Transverse colon (tissue), 4 donors: ENCODE measurements at regions of chr1 and their contacts with region 1.

Region 1: DNA sequence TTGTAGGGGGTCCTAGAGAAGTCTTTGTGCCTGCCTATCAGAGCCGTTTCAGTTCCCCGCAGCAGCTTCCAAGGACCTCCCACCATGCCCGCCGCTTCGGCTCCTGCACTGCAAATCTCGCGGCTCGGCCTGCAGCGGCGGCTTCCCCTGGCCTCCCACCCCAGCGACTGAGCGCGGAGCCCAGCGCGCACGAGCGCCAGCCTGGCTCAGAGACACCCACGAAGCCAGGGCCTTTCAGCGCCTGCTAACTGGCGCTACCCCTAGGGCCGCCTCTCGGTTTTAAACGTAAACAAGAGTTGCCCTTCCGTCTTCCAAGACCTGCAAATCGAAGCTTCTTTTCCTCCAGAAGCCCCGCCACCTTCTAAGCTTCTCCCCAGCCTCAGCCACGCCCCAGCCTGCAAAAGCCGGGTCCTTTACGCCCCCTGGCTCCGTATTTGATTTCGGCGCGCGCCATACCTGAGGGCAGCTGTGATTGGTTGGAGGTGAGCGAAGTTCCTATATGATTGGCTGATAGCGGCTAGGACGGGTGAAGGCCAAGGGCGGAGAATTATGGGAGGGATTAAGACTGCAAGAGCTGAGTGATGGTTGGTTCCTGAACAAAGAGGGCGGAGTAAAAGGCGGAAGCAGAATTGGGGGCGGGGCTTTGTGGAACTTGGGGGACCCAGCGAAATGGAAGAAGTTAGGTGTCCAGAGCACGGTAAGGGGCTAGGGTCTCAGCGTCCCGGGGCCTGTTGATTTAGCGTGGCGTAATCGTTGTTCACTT is at the start of gene TTF2:
- DNase-seq: peak; percentile 95
- H3K4me3 ChIP-seq: peak within 1 kb of the TSS; percentile 52 to 97 (median 70)
- H3K27ac ChIP-seq: peak within 1 kb of the TSS; percentile 88 to 93 (median 90)
- H3K4me1 ChIP-seq: peaks cover 0 to 22% (median 8%) of the 10 kb centered on the region in 4 donors
- H3K27me3 ChIP-seq: no peaks in the 10 kb centered on the region
- CTCF ChIP-seq: peak in 4 of 5 experiments; percentile 19 to 54 (median 32)
- EP300 ChIP-seq: no peak
- POLR2A ChIP-seq: peak; percentile 68
- total RNA-seq, gene TTF2: 9.6 to 25.9 (median 16.6) TPM

Region 2: DNA sequence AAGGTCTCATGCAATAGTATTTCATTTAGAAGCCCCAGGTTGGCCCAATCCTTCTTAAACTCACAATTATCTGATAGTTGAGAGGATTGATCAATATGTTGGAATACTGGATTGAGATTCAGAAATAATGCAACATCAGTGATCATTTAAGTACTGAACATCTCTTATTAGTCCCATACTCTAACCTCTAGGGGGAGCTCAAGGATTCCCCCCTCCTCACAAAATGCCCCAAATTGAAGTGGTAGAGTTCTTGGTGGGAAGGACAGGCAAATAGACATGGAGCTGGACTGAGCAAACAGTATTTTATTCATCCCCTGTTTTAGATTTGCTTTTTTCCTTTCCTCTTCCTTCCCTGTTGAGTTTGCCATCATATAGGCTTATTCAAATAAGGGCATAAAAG is 1784.6 kb before region 1 on chr1:
- in situ Hi-C with region 1: no loop called
- intact Hi-C with region 1: no loop called
- DNase-seq: no peak
- H3K4me3 ChIP-seq: no peak overlapping the region
- H3K27ac ChIP-seq: no peak overlapping the region
- H3K4me1 ChIP-seq: no peaks in the 10 kb centered on the region
- H3K27me3 ChIP-seq: no peaks in the 10 kb centered on the region
- CTCF ChIP-seq: peak in 2 of 5 experiments; percentile 17 to 22
- EP300 ChIP-seq: no peak
- POLR2A ChIP-seq: no peak

Region 3: DNA sequence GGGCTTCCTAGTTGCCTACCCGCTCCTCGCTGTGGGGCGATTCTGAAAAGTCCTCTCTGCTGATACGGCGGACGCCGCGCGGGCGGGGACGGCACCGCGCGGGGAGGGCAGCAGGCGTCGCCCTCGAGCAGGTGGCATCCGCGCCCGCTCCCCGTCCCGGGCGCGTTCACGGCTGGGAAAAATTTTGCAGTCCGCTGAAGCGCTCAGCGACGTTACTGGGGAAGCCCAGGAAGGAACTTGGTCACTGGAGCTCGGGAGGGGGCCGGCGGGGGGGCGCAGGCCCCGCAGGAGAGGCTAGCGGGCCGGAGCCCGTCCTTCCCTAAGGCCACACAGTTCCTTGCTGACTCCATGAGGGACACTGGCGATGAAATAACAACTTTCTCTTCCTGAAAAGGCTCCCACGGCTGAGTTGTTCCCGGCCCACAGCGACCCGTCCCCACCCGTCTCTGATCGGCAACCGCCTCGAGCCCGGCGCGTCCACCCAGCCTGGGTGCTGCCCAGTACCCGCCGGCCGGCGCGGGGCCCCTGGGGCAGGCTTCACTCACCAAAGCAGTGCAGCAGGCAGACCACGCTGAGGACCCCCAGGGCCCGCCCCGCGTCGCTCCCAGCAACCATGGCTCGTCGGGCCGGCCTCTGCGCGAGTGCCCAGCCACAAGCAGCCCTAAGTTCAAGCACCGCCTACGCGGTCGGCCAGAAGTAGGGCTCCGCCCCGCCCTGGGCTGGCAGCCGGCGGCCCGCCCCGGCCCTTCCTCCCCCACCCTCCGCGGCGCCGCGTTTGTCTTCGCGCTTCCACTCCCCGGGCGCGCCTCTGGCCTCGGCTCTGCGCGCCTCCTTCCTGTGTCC is 489.3 kb before region 1 on chr1 and contains the start of gene CD58:
- in situ Hi-C with region 1: loop called in 2 of 4 experiments (anchors 10 to 25 kb)
- intact Hi-C with region 1: loop called (anchors 10 kb)
- DNase-seq: peak; percentile 93
- H3K4me3 ChIP-seq: peak within 1 kb of the TSS; percentile 51 to 83 (median 67)
- H3K27ac ChIP-seq: peak within 1 kb of the TSS; percentile 96 to 99 (median 98)
- H3K4me1 ChIP-seq: peaks cover 0 to 37% (median 19%) of the 10 kb centered on the region in 4 donors
- H3K27me3 ChIP-seq: no peaks in the 10 kb centered on the region
- CTCF ChIP-seq: peak; percentile 64 to 85 (median 78)
- EP300 ChIP-seq: no peak
- POLR2A ChIP-seq: peak; percentile 88
- total RNA-seq, gene CD58: 1.8 to 48.7 (median 32.7) TPM

Region 4: GRCh38 chr1:116737020-116737854 is 322.6 kb before region 1 on chr1:
- in situ Hi-C with region 1: loop called in 2 of 4 experiments (anchors 10 kb)
- intact Hi-C with region 1: loop called (anchors 5 kb)
- DNase-seq: peak; percentile 65
- H3K4me3 ChIP-seq: no peak overlapping the region
- H3K27ac ChIP-seq: peak overlapping the region in 3 of 4 donors; percentile 15 to 41 (median 31)
- H3K4me1 ChIP-seq: peaks cover 0 to 8% (median 0%) of the 10 kb centered on the region in 4 donors
- H3K27me3 ChIP-seq: no peaks in the 10 kb centered on the region
- CTCF ChIP-seq: peak; percentile 71 to 85 (median 81)
- EP300 ChIP-seq: no peak
- POLR2A ChIP-seq: no peak

Region 5: DNA sequence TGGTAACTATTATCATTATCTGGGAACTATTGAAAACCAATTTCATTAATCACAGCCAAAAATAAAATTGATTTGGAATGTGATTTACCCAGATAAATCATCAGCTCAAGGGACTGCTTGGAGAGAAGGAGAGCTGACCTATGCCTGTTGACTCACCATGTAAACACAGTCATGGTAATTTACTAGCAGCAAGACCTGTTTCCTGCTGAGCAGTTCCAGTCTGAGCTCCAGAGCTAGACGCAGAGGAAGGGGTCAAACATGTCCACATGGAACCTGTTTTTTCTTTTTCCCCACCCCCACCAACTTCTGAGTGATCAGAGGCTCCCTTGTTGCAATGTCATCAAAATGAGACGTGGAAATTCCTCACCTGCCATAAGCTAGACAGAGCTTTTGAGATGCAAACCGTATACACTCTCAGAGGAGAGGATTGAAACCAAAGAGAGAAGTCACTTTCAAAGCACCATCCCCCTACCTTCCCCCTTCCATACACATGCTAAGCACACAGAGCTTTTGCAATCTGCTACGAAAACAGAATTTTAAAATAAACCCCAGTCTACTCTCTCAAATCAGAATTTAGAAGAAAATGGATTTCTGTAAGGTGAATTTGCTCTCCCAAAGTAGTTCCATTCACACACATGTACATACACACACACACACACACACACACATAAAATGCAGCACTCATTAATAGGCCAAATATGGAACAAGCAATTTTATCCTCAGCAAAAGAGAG is 206.0 kb before region 1 on chr1:
- in situ Hi-C with region 1: no loop called
- intact Hi-C with region 1: loop called (anchors 10 kb)
- DNase-seq: peak; percentile 49
- H3K4me3 ChIP-seq: no peak overlapping the region
- H3K27ac ChIP-seq: peak overlapping the region; percentile 37 to 75 (median 61)
- H3K4me1 ChIP-seq: peaks cover 13 to 35% (median 23%) of the 10 kb centered on the region in 4 donors
- H3K27me3 ChIP-seq: no peaks in the 10 kb centered on the region
- CTCF ChIP-seq: no peak
- EP300 ChIP-seq: no peak
- POLR2A ChIP-seq: no peak

Region 6: GRCh38 chr1:116954440-116954839 is 105.4 kb before region 1 on chr1:
- in situ Hi-C with region 1: no loop called
- intact Hi-C with region 1: no loop called
- DNase-seq: no peak
- H3K4me3 ChIP-seq: no peak overlapping the region
- H3K27ac ChIP-seq: peak overlapping the region in 2 of 4 donors; percentile 17 to 42
- H3K4me1 ChIP-seq: peaks cover 0 to 11% (median 7%) of the 10 kb centered on the region in 4 donors
- H3K27me3 ChIP-seq: no peaks in the 10 kb centered on the region
- CTCF ChIP-seq: no peak
- EP300 ChIP-seq: no peak
- POLR2A ChIP-seq: no peak

Region 7: GRCh38 chr1:117121776-117122697 is 62.2 kb after region 1 on chr1:
- in situ Hi-C with region 1: loop called in 3 of 4 experiments (anchors 5 to 10 kb)
- intact Hi-C with region 1: loop called (anchors 5 kb)
- DNase-seq: peak; percentile 97
- H3K4me3 ChIP-seq: peak overlapping the region; percentile 45 to 85 (median 68)
- H3K27ac ChIP-seq: peak overlapping the region; percentile 77 to 91 (median 86)
- H3K4me1 ChIP-seq: peaks cover 6 to 16% (median 13%) of the 10 kb centered on the region in 4 donors
- H3K27me3 ChIP-seq: peaks cover 6% of the 10 kb centered on the region
- CTCF ChIP-seq: peak; percentile 61 to 73 (median 70)
- EP300 ChIP-seq: no peak
- POLR2A ChIP-seq: no peak

Region 8: DNA sequence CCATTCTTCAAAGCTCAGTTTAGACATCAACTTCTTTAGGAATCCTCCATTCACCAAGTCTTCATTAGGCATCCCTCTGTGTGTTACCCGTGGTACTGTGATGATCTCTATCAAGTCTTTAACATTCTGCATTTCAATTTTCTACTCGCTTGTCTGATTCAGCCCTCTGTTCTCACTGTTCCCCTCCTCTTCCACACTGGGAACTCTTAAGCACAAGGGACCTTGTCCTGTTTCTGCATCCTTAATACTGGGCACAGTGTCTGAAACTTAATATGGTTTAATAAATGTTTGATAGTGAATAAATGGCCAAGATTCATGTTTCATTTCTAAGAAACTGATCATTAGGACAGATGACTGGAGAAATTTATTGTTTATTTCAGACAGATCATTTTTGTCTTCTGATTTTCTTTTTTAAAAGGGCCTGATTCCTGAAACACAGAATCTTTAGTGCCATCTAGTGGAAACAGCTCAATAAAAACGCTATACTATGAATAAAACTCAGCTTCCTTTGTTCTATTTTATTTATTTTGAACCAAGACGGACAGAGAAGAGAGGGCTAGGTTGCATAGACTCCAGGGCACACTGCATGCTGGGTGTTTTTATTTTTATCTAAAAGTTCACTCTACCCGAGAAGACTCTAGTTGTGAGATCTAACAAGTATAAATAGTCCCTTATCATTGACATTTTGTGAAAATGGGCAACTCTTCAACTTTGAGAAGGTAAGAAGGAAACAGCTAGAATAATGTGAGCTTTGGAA is 68.6 kb after region 1 on chr1:
- in situ Hi-C with region 1: loop called in 3 of 4 experiments (anchors 5 to 10 kb)
- intact Hi-C with region 1: loop called (anchors 5 kb)
- DNase-seq: no peak
- H3K4me3 ChIP-seq: no peak overlapping the region
- H3K27ac ChIP-seq: no peak overlapping the region
- H3K4me1 ChIP-seq: peaks cover 0 to 3% (median 0%) of the 10 kb centered on the region in 4 donors
- H3K27me3 ChIP-seq: peaks cover 6% of the 10 kb centered on the region
- CTCF ChIP-seq: peak; percentile 27 to 44 (median 34)
- EP300 ChIP-seq: no peak
- POLR2A ChIP-seq: no peak

Region 9: DNA sequence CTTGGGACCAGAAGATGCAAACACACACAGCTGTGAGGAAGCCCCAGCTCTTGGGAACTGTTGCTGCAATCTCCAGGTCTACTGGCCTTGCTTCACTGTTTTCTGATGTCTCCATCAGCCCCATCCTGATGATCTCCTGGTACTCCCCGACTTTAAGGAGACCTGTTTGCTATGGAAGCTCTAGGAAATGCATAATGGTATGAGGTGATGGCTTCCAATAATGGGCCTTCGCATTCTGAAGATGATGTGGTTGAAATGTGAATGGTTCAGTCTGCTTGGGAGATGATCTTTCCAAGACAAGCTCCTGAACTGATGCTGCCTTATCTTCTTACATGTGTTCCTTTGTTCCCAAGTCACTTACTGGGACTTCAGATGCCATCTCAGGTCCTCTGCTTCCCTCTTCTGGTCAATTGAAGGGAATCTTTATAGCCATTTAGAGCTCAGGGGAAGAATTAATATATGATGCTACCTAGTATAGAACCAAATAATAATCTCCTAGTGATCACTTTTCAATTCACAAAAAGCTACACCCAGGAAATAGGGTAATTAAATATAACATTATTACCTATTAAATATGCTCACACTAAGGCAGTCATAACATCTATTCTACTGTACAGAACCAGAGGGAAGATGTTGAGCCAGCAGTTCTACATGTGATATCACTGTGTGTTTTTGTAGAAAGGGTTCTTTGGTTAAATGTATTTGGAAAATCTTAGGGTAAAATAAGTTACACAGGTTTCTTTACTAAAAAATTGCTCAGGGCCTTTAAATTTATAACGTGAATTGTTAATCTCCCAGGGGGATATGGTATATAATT is 224.7 kb after region 1 on chr1:
- in situ Hi-C with region 1: loop called in 1 of 4 experiments (anchors 10 kb)
- intact Hi-C with region 1: no loop called
- DNase-seq: no peak
- H3K4me3 ChIP-seq: no peak overlapping the region
- H3K27ac ChIP-seq: no peak overlapping the region
- H3K4me1 ChIP-seq: peaks cover 0 to 3% (median 0%) of the 10 kb centered on the region in 4 donors
- H3K27me3 ChIP-seq: peaks cover 8% of the 10 kb centered on the region
- CTCF ChIP-seq: peak; percentile 41 to 63 (median 49)
- EP300 ChIP-seq: no peak
- POLR2A ChIP-seq: no peak